Caco-2 (cell line): ENCODE measurements at regions of chr3 and their contacts with region 1.

Region 1: GRCh38 chr3:130539005-130539404 is 22.0 kb downstream of the COL6A6 start:
- DNase-seq: peak; percentile 47 to 58
- H3K4me3 ChIP-seq: no peak overlapping the region
- H3K4me3 Mint-ChIP-seq: no peak overlapping the region
- H3K27ac Mint-ChIP-seq: no peak overlapping the region
- H3K4me1 ChIP-seq: no peaks in the 10 kb centered on the region
- H3K4me1 Mint-ChIP-seq: no peaks in the 10 kb centered on the region
- H3K27me3 ChIP-seq: no peaks in the 10 kb centered on the region
- H3K27me3 Mint-ChIP-seq: peaks cover 20% of the 10 kb centered on the region
- CTCF ChIP-seq: peak; percentile 81 to 86

Region 2: GRCh38 chr3:130480736-130481135 is 58.3 kb before region 1 on chr3:
- CTCF ChIA-PET with region 1: interaction called, 4 read pairs
- POLR2A ChIA-PET with region 1: no interaction called
- intact Hi-C with region 1: loop called (anchors 1 kb)
- DNase-seq: peak; percentile 29 to 42
- H3K4me3 ChIP-seq: no peak overlapping the region
- H3K4me3 Mint-ChIP-seq: no peak overlapping the region
- H3K27ac Mint-ChIP-seq: no peak overlapping the region
- H3K4me1 ChIP-seq: no peaks in the 10 kb centered on the region
- H3K4me1 Mint-ChIP-seq: no peaks in the 10 kb centered on the region
- H3K27me3 ChIP-seq: no peaks in the 10 kb centered on the region
- H3K27me3 Mint-ChIP-seq: peaks cover 2% of the 10 kb centered on the region
- CTCF ChIP-seq: peak; percentile 27 to 48